Right cardiac atrium (tissue), 5 donors: ENCODE measurements at regions of chr17 and their contacts with region 1.

Region 1: DNA sequence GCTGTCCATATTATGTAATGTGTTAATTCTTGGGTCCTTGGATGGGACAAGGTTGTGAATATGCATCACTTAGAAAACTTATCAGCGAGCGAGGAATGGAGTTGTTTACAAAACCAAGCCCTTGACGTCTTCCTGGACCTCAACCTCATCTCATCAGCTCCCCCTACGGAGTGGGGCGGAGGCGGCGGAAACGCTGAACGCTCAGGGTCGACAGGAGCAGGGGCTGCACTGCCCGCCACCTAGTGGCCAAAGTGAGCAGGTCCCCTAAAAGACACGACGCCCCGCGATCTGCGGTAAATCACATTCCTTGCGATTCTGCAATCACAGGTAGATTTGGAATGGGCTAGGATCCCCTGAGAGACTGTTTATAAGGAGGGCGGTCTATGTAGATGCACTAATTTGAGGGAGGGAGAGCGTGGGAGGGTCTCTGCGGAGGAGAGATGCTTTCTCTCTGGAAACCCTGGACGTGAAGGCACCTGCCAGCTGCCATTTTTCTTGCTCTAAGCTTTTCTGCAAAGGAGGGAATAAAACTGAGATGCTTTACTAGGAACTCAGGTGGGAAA is 5.4 kb upstream of the ICAM2 start:
- DNase-seq: peak; percentile 84 to 93 (median 92)
- ATAC-seq: peak; percentile 69 to 82
- H3K4me3 ChIP-seq: no peak overlapping the region
- H3K27ac ChIP-seq: no peak overlapping the region
- H3K4me1 ChIP-seq: peaks cover 3% of the 10 kb centered on the region
- H3K27me3 ChIP-seq: no peaks in the 10 kb centered on the region

Region 2: GRCh38 chr17:63929860-63930766 is 95.7 kb before region 1 on chr17:
- intact Hi-C with region 1: loop called in 1 of 4 experiments (anchors 10 kb)
- DNase-seq: peak; percentile 57 to 78 (median 65)
- ATAC-seq: peak; percentile 56 to 82
- H3K4me3 ChIP-seq: no peak overlapping the region
- H3K27ac ChIP-seq: no peak overlapping the region
- H3K4me1 ChIP-seq: no peaks in the 10 kb centered on the region
- H3K27me3 ChIP-seq: no peaks in the 10 kb centered on the region

Region 3: GRCh38 chr17:64129764-64130558 is 104.1 kb after region 1 on chr17 and contains the start of gene ERN1:
- intact Hi-C with region 1: loop called (anchors 2 to 5 kb)
- DNase-seq: peak; percentile 96 to 98 (median 98)
- ATAC-seq: peak; percentile 98
- H3K4me3 ChIP-seq: peak within 1 kb of the TSS; percentile 86
- H3K27ac ChIP-seq: peak within 1 kb of the TSS; percentile 90
- H3K4me1 ChIP-seq: no peaks in the 10 kb centered on the region
- H3K27me3 ChIP-seq: no peaks in the 10 kb centered on the region
- total RNA-seq, gene ERN1: 8.9 to 11.4 (median 10.0) TPM